CD8-positive, alpha-beta memory T cell (primary cell): ENCODE measurements at regions of chr18 and their contacts with region 1.

Region 1: DNA sequence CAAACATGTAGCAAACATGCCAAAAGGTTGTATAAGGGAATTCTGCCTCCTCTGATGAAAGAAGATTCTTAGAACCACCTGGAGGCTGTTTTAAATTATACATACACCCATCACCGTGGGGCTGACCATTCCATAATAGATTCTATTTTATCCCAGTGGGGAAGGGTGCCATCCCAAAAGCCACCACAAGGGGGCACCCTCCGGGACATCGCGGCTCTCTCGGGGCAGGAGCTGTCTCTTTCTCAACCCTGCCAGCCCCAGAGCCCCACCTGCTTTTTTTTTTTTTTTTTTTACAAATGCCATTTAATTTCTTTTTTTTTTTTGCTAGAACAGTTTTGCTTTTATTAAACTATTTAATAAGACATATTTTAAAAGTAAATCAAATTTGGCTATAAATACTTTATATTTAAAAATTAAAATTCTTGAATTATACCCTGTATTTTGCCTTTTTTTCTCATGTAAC is 8.6 kb upstream of the MTCL1 start:
- DNase-seq: peak; percentile 56 to 76 (median 69)
- H3K4me3 ChIP-seq: no peak overlapping the region
- H3K4me3 Mint-ChIP-seq: no peak overlapping the region
- H3K27ac ChIP-seq: no peak overlapping the region
- H3K27ac Mint-ChIP-seq: no peak overlapping the region
- H3K4me1 ChIP-seq: no peaks in the 10 kb centered on the region
- H3K4me1 Mint-ChIP-seq: no peaks in the 10 kb centered on the region
- H3K27me3 ChIP-seq: peaks cover 5% of the 10 kb centered on the region
- H3K27me3 Mint-ChIP-seq: peaks cover 13 to 26% of the 10 kb centered on the region in 2 donors

Region 2: GRCh38 chr18:7248877-7249276 is 1447.9 kb before region 1 on chr18:
- CTCF ChIA-PET with region 1: no interaction called
- POLR2A ChIA-PET with region 1: no interaction called
- DNase-seq: no peak
- H3K4me3 ChIP-seq: no peak overlapping the region
- H3K4me3 Mint-ChIP-seq: no peak overlapping the region
- H3K27ac ChIP-seq: no peak overlapping the region
- H3K27ac Mint-ChIP-seq: no peak overlapping the region
- H3K4me1 ChIP-seq: no peaks in the 10 kb centered on the region
- H3K4me1 Mint-ChIP-seq: no peaks in the 10 kb centered on the region
- H3K27me3 ChIP-seq: no peaks in the 10 kb centered on the region
- H3K27me3 Mint-ChIP-seq: no peaks in the 10 kb centered on the region

Region 3: GRCh38 chr18:8686611-8687010 is 10.2 kb before region 1 on chr18:
- CTCF ChIA-PET with region 1: interaction called, 11 read pairs
- POLR2A ChIA-PET with region 1: no interaction called
- DNase-seq: no peak
- H3K4me3 ChIP-seq: no peak overlapping the region
- H3K4me3 Mint-ChIP-seq: no peak overlapping the region
- H3K27ac ChIP-seq: no peak overlapping the region
- H3K27ac Mint-ChIP-seq: no peak overlapping the region
- H3K4me1 ChIP-seq: no peaks in the 10 kb centered on the region
- H3K4me1 Mint-ChIP-seq: no peaks in the 10 kb centered on the region
- H3K27me3 ChIP-seq: no peaks in the 10 kb centered on the region
- H3K27me3 Mint-ChIP-seq: peaks cover 0 to 15% of the 10 kb centered on the region in 2 donors

Region 4: GRCh38 chr18:8780227-8780626 is 83.4 kb after region 1 on chr18:
- CTCF ChIA-PET with region 1: no interaction called
- POLR2A ChIA-PET with region 1: no interaction called
- DNase-seq: no peak
- H3K4me3 ChIP-seq: no peak overlapping the region
- H3K4me3 Mint-ChIP-seq: no peak overlapping the region
- H3K27ac ChIP-seq: no peak overlapping the region
- H3K27ac Mint-ChIP-seq: no peak overlapping the region
- H3K4me1 ChIP-seq: no peaks in the 10 kb centered on the region
- H3K4me1 Mint-ChIP-seq: no peaks in the 10 kb centered on the region
- H3K27me3 ChIP-seq: no peaks in the 10 kb centered on the region
- H3K27me3 Mint-ChIP-seq: peaks cover 6 to 11% of the 10 kb centered on the region in 2 donors

Region 5: GRCh38 chr18:8982416-8983184 is 285.8 kb after region 1 on chr18:
- CTCF ChIA-PET with region 1: interaction called, 35 read pairs
- POLR2A ChIA-PET with region 1: no interaction called
- DNase-seq: no peak
- H3K4me3 ChIP-seq: no peak overlapping the region
- H3K4me3 Mint-ChIP-seq: no peak overlapping the region
- H3K27ac ChIP-seq: no peak overlapping the region
- H3K27ac Mint-ChIP-seq: no peak overlapping the region
- H3K4me1 ChIP-seq: no peaks in the 10 kb centered on the region
- H3K4me1 Mint-ChIP-seq: no peaks in the 10 kb centered on the region
- H3K27me3 ChIP-seq: no peaks in the 10 kb centered on the region
- H3K27me3 Mint-ChIP-seq: peaks cover 0 to 6% of the 10 kb centered on the region in 2 donors

Region 6: GRCh38 chr18:8988261-8988871 is 291.6 kb after region 1 on chr18:
- CTCF ChIA-PET with region 1: interaction called, 35 read pairs
- POLR2A ChIA-PET with region 1: no interaction called
- DNase-seq: peak; percentile 30 to 69 (median 43)
- H3K4me3 ChIP-seq: no peak overlapping the region
- H3K4me3 Mint-ChIP-seq: no peak overlapping the region
- H3K27ac ChIP-seq: no peak overlapping the region
- H3K27ac Mint-ChIP-seq: peak overlapping the region in 1 of 8 donors; percentile 74
- H3K4me1 ChIP-seq: no peaks in the 10 kb centered on the region
- H3K4me1 Mint-ChIP-seq: no peaks in the 10 kb centered on the region
- H3K27me3 ChIP-seq: no peaks in the 10 kb centered on the region
- H3K27me3 Mint-ChIP-seq: peaks cover 10 to 36% of the 10 kb centered on the region in 2 donors